HepG2 (cell line): ENCODE measurements at regions of chr2 and their contacts with region 1.

Region 1: GRCh38 chr2:226799181-226799975 is at the start of gene IRS1:
- DNase-seq: peak; percentile 66
- ATAC-seq: peak; percentile 65
- H3K4me3 ChIP-seq: peak within 1 kb of the TSS; percentile 59 to 72 (median 62)
- H3K27ac ChIP-seq: peak within 1 kb of the TSS; percentile 96
- H3K4me1 ChIP-seq: peaks cover 79% of the 10 kb centered on the region
- H3K27me3 ChIP-seq: no peaks in the 10 kb centered on the region
- CTCF ChIP-seq: no peak
- EP300 ChIP-seq: peak in 1 of 2 experiments; percentile 50; a peak in 2 of 4 replicates
- POLR2A ChIP-seq: no peak
- RAD21 ChIP-seq: peak; percentile 93
- total RNA-seq, gene IRS1: 7.9 and 8.7 TPM in 2 replicates

Region 2: DNA sequence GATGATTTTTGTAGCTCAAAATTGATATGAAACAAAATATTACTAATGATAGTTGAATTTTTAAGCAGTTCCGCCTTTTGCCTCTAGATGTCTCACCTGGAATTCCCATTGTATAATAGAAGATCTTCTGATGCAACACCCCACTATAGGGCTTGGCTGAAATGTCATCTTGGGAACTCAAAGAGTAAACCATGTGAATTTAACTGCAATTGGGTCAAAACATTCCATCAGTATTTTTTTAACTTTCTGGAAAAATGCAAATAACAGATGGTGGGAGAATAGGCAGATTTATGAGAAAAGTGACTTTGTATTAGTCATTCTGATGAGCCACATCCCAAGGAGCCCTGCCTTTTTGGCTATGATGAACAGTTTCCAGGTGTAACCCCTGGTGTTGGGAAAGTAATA is 909.9 kb before region 1 on chr2:
- CTCF ChIA-PET with region 1: interaction called, 9 read pairs
- POLR2A ChIA-PET with region 1: interaction called, 5 read pairs
- in situ Hi-C with region 1: loop called (anchors 5 kb)
- intact Hi-C with region 1: loop called (anchors 1 kb)
- DNase-seq: peak; percentile 57
- ATAC-seq: peak; percentile 71
- H3K4me3 ChIP-seq: no peak overlapping the region
- H3K27ac ChIP-seq: no peak overlapping the region
- H3K4me1 ChIP-seq: peaks cover 4% of the 10 kb centered on the region
- H3K27me3 ChIP-seq: no peaks in the 10 kb centered on the region
- CTCF ChIP-seq: peak; percentile 81
- EP300 ChIP-seq: peak in 1 of 2 experiments; percentile 49; a peak in 1 of 4 replicates
- POLR2A ChIP-seq: no peak
- RAD21 ChIP-seq: peak; percentile 51; the same call in 1 of the 2 replicates

Region 3: GRCh38 chr2:226159754-226160479 is 639.5 kb before region 1 on chr2:
- CTCF ChIA-PET with region 1: no interaction called
- POLR2A ChIA-PET with region 1: interaction called, 26 read pairs
- in situ Hi-C with region 1: no loop called
- intact Hi-C with region 1: loop called (anchors 1 kb)
- DNase-seq: peak; percentile 99
- ATAC-seq: peak; percentile 97
- H3K4me3 ChIP-seq: peak overlapping the region in 2 of 3 experiments; percentile 3 to 14; a peak in 1 of 6 replicates
- H3K27ac ChIP-seq: peak overlapping the region; percentile 97
- H3K4me1 ChIP-seq: peaks cover 73% of the 10 kb centered on the region
- H3K27me3 ChIP-seq: no peaks in the 10 kb centered on the region; a peak in 1 of 5 replicates
- CTCF ChIP-seq: no peak
- EP300 ChIP-seq: peak; percentile 94 to 100; a peak in 3 of 4 replicates
- POLR2A ChIP-seq: no peak
- RAD21 ChIP-seq: 0 out of 2 replicates have a peak, but pooled peaks have one; percentile 9

Region 4: DNA sequence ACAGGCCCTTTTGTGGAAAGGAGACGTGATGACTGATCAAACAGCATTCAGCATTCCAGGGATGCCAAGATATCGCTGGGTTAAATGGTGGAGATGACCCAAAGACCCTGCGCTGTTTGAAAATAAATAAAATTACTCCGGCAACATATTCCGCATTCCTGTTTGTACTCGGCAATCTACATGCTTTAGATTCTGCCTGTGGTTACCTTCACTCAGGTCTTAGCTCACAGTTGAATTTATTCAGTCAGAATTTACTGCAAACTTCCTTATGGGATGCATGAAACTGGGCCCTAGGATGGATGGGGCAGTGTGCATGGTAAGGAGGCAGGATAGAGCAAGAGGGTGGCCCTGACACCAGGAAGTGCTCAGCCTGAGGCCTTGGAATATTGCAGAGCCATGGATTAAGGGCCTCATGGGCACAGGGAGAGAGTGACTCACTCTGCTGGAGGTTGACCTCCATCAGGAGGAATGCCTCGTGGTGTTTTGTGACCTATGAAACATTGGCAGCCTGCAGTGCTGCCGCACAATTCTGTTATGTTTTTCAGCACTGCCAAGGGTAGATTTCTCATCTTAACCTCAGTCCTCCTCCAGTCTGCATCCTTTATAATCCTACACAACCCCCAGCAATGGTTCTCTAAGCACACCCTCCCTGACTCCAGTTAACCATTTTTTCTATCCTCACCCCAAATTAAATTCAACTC is 321.1 kb before region 1 on chr2:
- CTCF ChIA-PET with region 1: no interaction called
- POLR2A ChIA-PET with region 1: interaction called, 21 read pairs
- in situ Hi-C with region 1: no loop called
- intact Hi-C with region 1: no loop called
- DNase-seq: peak; percentile 89
- ATAC-seq: peak; percentile 99
- H3K4me3 ChIP-seq: peak overlapping the region; percentile 0 to 6 (median 5); a peak in 3 of 6 replicates
- H3K27ac ChIP-seq: peak overlapping the region; percentile 57
- H3K4me1 ChIP-seq: peaks cover 26% of the 10 kb centered on the region
- H3K27me3 ChIP-seq: no peaks in the 10 kb centered on the region
- CTCF ChIP-seq: 0 out of 2 replicates have a peak, but pooled peaks have one; percentile 12
- EP300 ChIP-seq: peak in 1 of 2 experiments; percentile 58; a peak in 2 of 4 replicates
- POLR2A ChIP-seq: peak; percentile 29 to 47; a peak in 2 of 4 replicates
- RAD21 ChIP-seq: no peak

Region 5: DNA sequence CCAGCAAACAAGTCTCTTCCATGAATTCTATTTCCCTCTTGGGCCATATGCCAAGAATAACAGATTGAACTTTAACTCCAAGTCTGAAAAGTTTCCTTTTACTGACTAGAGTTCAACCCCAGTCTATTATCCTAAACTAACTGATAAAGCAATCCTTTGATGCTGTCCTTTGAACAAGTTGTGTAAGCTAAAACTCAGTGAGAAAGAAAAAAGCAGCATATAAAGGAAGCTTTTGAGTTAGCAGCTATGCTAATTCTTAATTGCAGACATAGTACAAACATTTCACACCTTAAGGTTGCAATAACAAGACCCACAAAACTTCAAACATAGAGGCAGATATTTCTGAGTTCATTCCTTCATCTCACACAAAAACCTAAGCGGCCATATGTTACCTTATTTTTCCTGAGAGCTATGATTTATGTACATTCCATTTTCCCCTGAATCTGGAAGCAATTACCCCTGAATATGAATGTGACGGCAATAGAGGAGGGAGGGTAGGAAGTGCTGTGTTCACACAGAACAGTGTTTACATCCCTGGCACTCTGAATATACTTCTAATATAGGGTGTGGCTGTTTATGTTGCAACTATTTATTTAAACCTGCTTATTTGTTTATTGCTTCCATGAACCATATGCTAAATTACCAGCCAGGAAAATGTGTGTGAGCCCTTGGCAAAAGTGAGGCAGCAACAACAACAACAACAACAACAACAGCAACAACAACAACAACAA is 180.3 kb before region 1 on chr2:
- CTCF ChIA-PET with region 1: no interaction called
- POLR2A ChIA-PET with region 1: interaction called, 24 read pairs
- in situ Hi-C with region 1: loop called (anchors 10 kb)
- intact Hi-C with region 1: loop called (anchors 1 kb)
- DNase-seq: peak; percentile 98
- ATAC-seq: peak; percentile 86
- H3K4me3 ChIP-seq: peak overlapping the region in 1 of 3 experiments; percentile 18; a peak in 1 of 6 replicates
- H3K27ac ChIP-seq: peak overlapping the region; percentile 75
- H3K4me1 ChIP-seq: peaks cover 66% of the 10 kb centered on the region
- H3K27me3 ChIP-seq: no peaks in the 10 kb centered on the region
- CTCF ChIP-seq: no peak
- EP300 ChIP-seq: peak; percentile 26 to 100; a peak in 2 of 4 replicates
- POLR2A ChIP-seq: no peak
- RAD21 ChIP-seq: no peak

Region 6: DNA sequence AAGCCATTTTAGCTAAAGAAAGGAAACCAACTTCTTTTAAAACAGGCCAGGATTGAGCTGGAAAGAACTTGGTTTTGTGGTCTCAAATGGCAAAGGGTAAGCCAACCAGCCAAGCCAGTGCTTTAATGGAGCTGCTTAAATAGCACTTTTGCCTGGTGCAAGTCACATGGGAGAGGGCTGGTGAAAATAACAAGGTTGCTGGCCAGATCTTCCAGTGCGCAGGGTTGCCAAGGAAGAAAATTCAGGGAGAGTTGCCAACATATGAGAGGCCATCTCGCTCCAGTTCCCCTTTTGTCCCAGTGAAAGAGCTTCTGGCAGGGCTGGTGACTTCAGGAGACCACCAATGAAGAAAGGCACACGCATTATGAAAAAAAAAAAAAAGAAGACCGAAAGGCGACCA is 57.0 kb before region 1 on chr2:
- CTCF ChIA-PET with region 1: no interaction called
- POLR2A ChIA-PET with region 1: interaction called, 29 read pairs
- in situ Hi-C with region 1: loop called (anchors 10 kb)
- intact Hi-C with region 1: loop called (anchors 1 kb)
- DNase-seq: no peak
- ATAC-seq: no peak
- H3K4me3 ChIP-seq: no peak overlapping the region
- H3K27ac ChIP-seq: no peak overlapping the region
- H3K4me1 ChIP-seq: peaks cover 62% of the 10 kb centered on the region
- H3K27me3 ChIP-seq: no peaks in the 10 kb centered on the region
- CTCF ChIP-seq: no peak
- EP300 ChIP-seq: no peak
- POLR2A ChIP-seq: no peak
- RAD21 ChIP-seq: no peak

Region 7: DNA sequence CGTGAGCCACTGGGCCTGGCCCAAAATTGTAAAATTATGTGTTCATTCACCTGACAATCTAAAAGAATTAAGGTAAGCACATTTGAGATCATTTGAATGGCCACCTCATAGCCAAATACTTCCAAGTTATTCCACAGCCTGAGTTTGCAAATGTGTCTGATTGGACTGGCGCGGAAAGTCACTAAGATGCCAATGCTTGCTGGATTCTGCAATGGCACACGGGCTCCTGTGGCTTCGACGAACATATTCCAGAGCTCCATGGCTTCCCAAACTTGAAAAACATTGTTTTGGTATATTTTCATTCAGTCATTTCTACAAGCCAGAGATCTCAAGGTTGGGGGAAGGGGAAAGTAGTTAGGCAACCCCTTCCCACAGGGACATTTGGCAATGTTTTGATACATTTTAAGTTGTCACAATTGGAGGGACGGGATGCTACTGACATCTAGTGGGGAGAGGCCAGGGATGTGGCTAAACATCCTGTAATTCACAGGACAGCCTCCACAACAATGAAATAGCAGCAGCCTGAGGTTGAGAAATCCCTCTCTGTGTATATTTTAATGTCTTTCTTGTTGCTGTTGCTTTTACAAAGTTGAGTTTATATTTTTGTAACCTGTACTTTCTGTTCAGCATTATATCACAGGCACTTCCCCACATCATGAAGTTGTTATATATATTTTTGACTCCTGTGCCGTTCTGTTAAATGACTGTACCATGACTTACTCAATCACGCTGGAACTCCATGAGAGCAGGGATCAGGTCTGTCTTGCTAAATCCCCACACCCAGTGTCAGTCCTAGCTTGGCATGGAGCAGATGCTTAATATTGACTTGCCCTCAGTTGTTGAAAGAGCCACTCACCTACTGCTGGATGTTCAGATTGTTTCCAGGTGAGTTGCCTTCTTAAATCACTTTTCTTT is 307.7 kb after region 1 on chr2:
- CTCF ChIA-PET with region 1: no interaction called
- POLR2A ChIA-PET with region 1: no interaction called
- in situ Hi-C with region 1: loop called (anchors 10 kb)
- intact Hi-C with region 1: loop called (anchors 5 kb)
- DNase-seq: peak; percentile 73
- ATAC-seq: peak; percentile 100
- H3K4me3 ChIP-seq: no peak overlapping the region
- H3K27ac ChIP-seq: no peak overlapping the region
- H3K4me1 ChIP-seq: no peaks in the 10 kb centered on the region
- H3K27me3 ChIP-seq: peaks cover 0 to 7% of the 10 kb centered on the region in 2 experiments; a peak in 1 of 5 replicates
- CTCF ChIP-seq: peak; percentile 94
- EP300 ChIP-seq: no peak
- POLR2A ChIP-seq: no peak
- RAD21 ChIP-seq: peak; percentile 89